Mammary epithelial cell (primary cell): ENCODE measurements at regions of chr7 and their contacts with region 1.

Region 1: GRCh38 chr7:132580717-132581285 is 4.5 kb upstream of the PLXNA4 start:
- DNase-seq: peak; percentile 39
- H3K4me3 ChIP-seq: no peak overlapping the region
- H3K27ac ChIP-seq: no peak overlapping the region
- H3K4me1 ChIP-seq: peaks cover 6% of the 10 kb centered on the region
- H3K27me3 ChIP-seq: peaks cover 23% of the 10 kb centered on the region
- CTCF ChIP-seq: peak; percentile 62 to 76

Region 2: GRCh38 chr7:131688738-131689661 is 891.8 kb before region 1 on chr7:
- CTCF ChIA-PET with region 1: interaction called, 5 read pairs
- dilution Hi-C with region 1: no loop called
- in situ Hi-C with region 1: loop called in 1 of 2 experiments (anchors 25 kb)
- intact Hi-C with region 1: loop called (anchors 2 kb)
- DNase-seq: peak; percentile 31
- H3K4me3 ChIP-seq: no peak overlapping the region
- H3K27ac ChIP-seq: no peak overlapping the region
- H3K4me1 ChIP-seq: peaks cover 3% of the 10 kb centered on the region
- H3K27me3 ChIP-seq: no peaks in the 10 kb centered on the region
- CTCF ChIP-seq: peak; percentile 96

Region 3: GRCh38 chr7:131753620-131754222 is 827.1 kb before region 1 on chr7:
- CTCF ChIA-PET with region 1: interaction called, 4 read pairs
- dilution Hi-C with region 1: no loop called
- in situ Hi-C with region 1: no loop called
- intact Hi-C with region 1: loop called (anchors 5 kb)
- DNase-seq: no peak
- H3K4me3 ChIP-seq: no peak overlapping the region
- H3K27ac ChIP-seq: no peak overlapping the region
- H3K4me1 ChIP-seq: no peaks in the 10 kb centered on the region
- H3K27me3 ChIP-seq: peaks cover 6% of the 10 kb centered on the region
- CTCF ChIP-seq: peak; percentile 36 to 78

Region 4: DNA sequence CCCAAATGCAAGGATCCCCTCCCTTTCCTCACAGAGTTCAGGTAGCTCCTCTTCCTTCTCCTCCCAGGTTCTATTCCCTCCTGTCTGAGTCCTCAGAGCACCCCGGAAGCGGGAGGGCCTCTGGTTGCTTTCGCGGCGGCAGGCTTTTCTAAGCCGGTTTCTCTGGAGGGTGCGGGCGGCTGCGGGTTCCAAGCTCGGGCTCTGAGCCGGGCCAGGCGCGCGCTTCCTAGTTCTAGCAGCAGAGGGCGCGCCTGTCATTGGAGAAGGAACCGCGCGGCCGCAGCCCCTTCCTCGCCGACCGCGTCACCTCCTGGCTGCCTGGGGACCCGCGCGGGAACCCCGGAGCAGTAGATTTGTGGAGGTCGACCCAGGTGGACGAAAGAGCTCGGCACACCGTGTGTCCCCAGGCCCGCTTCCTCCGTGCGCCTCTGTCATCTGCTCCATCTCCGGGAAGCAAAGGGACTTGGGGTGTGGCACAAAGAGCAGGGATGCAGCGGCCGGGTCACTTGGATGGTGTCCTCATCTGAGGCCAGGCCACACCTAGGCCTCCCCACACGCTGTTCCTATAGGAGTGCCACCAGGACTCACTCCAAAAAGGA is 635.4 kb before region 1 on chr7:
- CTCF ChIA-PET with region 1: no interaction called
- dilution Hi-C with region 1: no loop called
- in situ Hi-C with region 1: loop called in 1 of 2 experiments (anchors 25 kb)
- intact Hi-C with region 1: loop called (anchors 2 kb)
- DNase-seq: peak; percentile 12
- H3K4me3 ChIP-seq: no peak overlapping the region
- H3K27ac ChIP-seq: no peak overlapping the region
- H3K4me1 ChIP-seq: peaks cover 5% of the 10 kb centered on the region
- H3K27me3 ChIP-seq: no peaks in the 10 kb centered on the region
- CTCF ChIP-seq: peak; percentile 50 to 86

Region 5: GRCh38 chr7:132112657-132113056 is 468.1 kb before region 1 on chr7:
- CTCF ChIA-PET with region 1: no interaction called
- dilution Hi-C with region 1: no loop called
- in situ Hi-C with region 1: no loop called
- intact Hi-C with region 1: no loop called
- DNase-seq: no peak
- H3K4me3 ChIP-seq: no peak overlapping the region
- H3K27ac ChIP-seq: no peak overlapping the region
- H3K4me1 ChIP-seq: peaks cover 20% of the 10 kb centered on the region
- H3K27me3 ChIP-seq: no peaks in the 10 kb centered on the region
- CTCF ChIP-seq: no peak

Region 6: DNA sequence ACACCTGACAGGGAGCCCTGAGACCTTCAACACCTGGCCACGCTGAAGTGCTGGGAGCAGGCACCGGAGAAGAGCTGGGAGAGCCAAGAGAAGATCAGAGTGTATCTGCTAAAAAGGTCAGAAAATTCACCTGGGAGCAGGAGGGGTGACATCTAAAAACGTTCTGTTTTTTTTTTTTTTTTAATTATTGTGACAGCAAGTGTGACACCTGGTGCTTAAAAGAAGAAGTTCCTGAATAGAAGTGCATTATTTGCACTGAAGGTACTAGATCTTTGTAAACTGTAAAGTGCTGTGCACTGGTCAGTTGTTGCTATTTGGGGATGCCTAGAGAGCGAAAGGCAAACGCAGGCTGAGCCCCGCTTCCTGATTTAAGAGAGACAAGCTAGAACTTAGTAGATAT is 426.6 kb before region 1 on chr7:
- CTCF ChIA-PET with region 1: interaction called, 20 read pairs
- dilution Hi-C with region 1: no loop called
- in situ Hi-C with region 1: no loop called
- intact Hi-C with region 1: no loop called
- DNase-seq: no peak
- H3K4me3 ChIP-seq: no peak overlapping the region
- H3K27ac ChIP-seq: no peak overlapping the region
- H3K4me1 ChIP-seq: no peaks in the 10 kb centered on the region
- H3K27me3 ChIP-seq: no peaks in the 10 kb centered on the region
- CTCF ChIP-seq: peak; percentile 6 to 26

Region 7: GRCh38 chr7:132171130-132171576 is 409.6 kb before region 1 on chr7:
- CTCF ChIA-PET with region 1: no interaction called
- dilution Hi-C with region 1: no loop called
- in situ Hi-C with region 1: no loop called
- intact Hi-C with region 1: no loop called
- DNase-seq: no peak
- H3K4me3 ChIP-seq: no peak overlapping the region
- H3K27ac ChIP-seq: no peak overlapping the region
- H3K4me1 ChIP-seq: no peaks in the 10 kb centered on the region
- H3K27me3 ChIP-seq: no peaks in the 10 kb centered on the region
- CTCF ChIP-seq: no peak

Region 8: GRCh38 chr7:132318352-132319318 is 262.2 kb before region 1 on chr7:
- CTCF ChIA-PET with region 1: interaction called, 4 read pairs
- dilution Hi-C with region 1: loop called (anchors 25 kb)
- in situ Hi-C with region 1: loop called (anchors 10 to 25 kb)
- intact Hi-C with region 1: loop called (anchors 1 kb)
- DNase-seq: peak; percentile 61
- H3K4me3 ChIP-seq: no peak overlapping the region
- H3K27ac ChIP-seq: no peak overlapping the region
- H3K4me1 ChIP-seq: peaks cover 3% of the 10 kb centered on the region
- H3K27me3 ChIP-seq: no peaks in the 10 kb centered on the region
- CTCF ChIP-seq: peak; percentile 87 to 88

Region 9: DNA sequence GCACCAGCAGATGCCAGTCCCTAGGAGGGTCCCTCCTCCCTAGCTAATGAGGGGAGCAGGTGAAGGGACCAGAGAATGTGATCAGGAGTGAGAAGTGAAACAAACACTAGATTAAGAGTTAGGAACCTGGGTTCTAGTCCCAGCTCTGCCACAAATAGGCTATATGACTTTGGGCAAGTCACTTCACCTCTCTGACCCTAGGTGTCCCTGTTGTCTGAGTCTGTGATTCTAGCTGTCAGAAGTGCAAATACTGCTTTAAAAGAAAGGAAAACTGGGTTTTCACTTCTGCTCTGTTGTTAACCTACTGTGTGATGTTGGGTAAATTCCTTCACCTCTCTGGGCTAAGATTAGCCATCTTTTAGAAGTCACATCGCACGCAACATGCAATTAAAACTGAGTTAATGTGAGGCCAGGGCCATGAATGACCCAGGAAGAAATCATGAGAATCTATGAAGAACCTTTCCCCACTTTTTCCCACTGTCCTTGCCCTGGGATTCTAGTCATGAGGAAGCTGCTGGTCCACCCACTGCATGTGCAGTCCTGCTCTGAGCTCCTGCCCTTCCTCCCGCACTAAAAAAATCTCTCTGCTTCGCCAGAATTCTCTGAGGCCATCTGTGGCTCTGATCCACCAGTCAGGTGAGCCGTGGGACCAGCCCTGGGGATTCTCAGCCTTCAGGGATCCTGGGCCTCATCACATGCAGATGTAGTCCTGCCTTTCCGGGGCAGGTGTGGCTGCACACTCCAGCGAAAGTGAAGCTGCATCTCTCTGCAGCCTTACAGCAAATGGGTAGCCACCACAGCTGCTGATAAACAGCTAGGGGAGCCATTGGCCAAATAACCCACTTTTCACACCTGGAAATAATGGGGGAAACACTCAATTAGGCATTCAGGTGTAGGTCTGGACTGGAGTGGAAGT is 186.3 kb before region 1 on chr7:
- CTCF ChIA-PET with region 1: no interaction called
- dilution Hi-C with region 1: no loop called
- in situ Hi-C with region 1: no loop called
- intact Hi-C with region 1: loop called (anchors 2 kb)
- DNase-seq: no peak
- H3K4me3 ChIP-seq: no peak overlapping the region
- H3K27ac ChIP-seq: no peak overlapping the region
- H3K4me1 ChIP-seq: no peaks in the 10 kb centered on the region
- H3K27me3 ChIP-seq: peaks cover 2% of the 10 kb centered on the region
- CTCF ChIP-seq: peak in 1 of 2 donors; percentile 22